ENCODE measurements at regions of chr5 and their contacts with region 1.

Region 1: DNA sequence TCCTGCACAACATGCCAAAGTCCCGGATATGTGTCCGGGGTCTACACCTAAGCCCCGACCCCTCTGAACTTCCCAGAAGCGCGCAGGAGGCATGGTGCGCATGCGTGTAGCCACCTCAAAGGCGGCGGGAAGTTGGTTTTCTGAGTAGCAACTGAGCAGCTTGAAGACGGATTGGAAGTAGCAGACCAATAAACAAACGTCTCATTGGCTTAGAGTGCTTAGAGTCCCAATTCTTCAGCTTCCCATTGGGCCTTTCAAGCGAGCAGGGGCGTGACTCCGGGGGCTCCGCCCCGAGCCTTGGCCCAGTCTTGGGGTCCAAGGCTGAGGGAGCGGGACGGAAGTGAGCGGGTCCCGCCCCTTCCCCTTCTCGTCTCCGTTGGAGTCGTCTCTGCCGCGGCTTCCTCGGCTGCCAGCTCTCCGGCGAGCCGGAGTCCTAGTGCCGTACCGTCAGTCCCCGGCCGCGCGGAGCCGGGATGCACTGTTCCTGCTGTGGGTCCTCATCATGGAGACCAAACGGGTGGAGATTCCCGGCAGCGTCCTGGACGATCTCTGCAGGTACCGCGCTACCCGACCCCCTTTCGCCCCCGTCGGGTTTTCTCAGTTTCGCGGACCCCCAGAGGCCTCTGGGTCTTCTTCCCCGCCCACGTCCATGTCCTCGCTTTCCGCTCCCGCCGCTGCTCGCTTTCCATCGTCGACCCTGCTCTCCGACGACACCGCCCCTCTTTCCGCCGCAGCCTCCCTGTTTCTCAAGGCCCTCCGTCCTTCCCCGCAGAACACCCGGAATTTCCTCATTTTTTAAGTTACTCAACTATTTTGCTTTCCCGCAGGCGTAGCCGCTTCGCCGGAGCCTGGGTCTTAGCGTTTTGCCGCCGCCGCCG is at the start of gene DCP2:
- DNase-seq: peak; percentile 96
- H3K4me3 Mint-ChIP-seq: peak within 1 kb of the TSS; percentile 96
- H3K27ac Mint-ChIP-seq: peak within 1 kb of the TSS; percentile 95
- H3K4me1 Mint-ChIP-seq: peaks cover 38% of the 10 kb centered on the region
- H3K27me3 Mint-ChIP-seq: no peaks in the 10 kb centered on the region
- total RNA-seq, gene DCP2: 129 TPM

Region 2: GRCh38 chr5:112551419-112552032 is 425.1 kb before region 1 on chr5:
- CTCF ChIA-PET with region 1: interaction called, 3 read pairs
- intact Hi-C with region 1: loop called (anchors 5 kb)
- DNase-seq: peak; percentile 45
- H3K4me3 Mint-ChIP-seq: no peak overlapping the region
- H3K27ac Mint-ChIP-seq: no peak overlapping the region
- H3K4me1 Mint-ChIP-seq: no peaks in the 10 kb centered on the region
- H3K27me3 Mint-ChIP-seq: no peaks in the 10 kb centered on the region

Region 3: DNA sequence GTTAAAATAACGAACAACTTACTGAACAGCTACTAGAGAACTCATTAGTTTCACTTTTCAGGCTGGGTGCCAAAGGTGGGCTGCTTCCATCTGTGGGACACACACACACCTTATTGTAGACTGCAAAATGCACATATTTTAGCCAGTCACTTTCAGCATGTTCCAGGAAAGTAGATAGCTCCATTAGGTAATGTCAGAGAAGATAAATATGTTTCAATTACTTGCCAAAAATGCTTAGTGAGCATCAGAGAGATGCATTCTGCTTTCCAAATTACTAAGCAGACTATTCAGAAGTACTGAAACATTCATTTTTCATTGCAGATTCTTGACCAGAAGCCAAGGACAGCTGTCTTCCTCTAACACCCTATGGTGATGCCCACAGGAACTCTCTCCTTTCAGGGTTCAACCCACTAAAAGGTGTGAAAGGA is 295.2 kb before region 1 on chr5:
- CTCF ChIA-PET with region 1: no interaction called
- intact Hi-C with region 1: no loop called
- DNase-seq: no peak
- H3K4me3 Mint-ChIP-seq: no peak overlapping the region
- H3K27ac Mint-ChIP-seq: no peak overlapping the region
- H3K4me1 Mint-ChIP-seq: no peaks in the 10 kb centered on the region
- H3K27me3 Mint-ChIP-seq: peaks cover 20% of the 10 kb centered on the region

Region 4: GRCh38 chr5:112860929-112861637 is 115.6 kb before region 1 on chr5 and contains the start of gene SRP19:
- CTCF ChIA-PET with region 1: interaction called, 4 read pairs
- intact Hi-C with region 1: loop called (anchors 1 kb)
- DNase-seq: peak; percentile 96
- H3K4me3 Mint-ChIP-seq: peak within 1 kb of the TSS; percentile 96
- H3K27ac Mint-ChIP-seq: peak within 1 kb of the TSS; percentile 95
- H3K4me1 Mint-ChIP-seq: peaks cover 30% of the 10 kb centered on the region
- H3K27me3 Mint-ChIP-seq: peaks cover 9% of the 10 kb centered on the region
- total RNA-seq, gene SRP19: 43.7 to 49.6 TPM

Region 5: DNA sequence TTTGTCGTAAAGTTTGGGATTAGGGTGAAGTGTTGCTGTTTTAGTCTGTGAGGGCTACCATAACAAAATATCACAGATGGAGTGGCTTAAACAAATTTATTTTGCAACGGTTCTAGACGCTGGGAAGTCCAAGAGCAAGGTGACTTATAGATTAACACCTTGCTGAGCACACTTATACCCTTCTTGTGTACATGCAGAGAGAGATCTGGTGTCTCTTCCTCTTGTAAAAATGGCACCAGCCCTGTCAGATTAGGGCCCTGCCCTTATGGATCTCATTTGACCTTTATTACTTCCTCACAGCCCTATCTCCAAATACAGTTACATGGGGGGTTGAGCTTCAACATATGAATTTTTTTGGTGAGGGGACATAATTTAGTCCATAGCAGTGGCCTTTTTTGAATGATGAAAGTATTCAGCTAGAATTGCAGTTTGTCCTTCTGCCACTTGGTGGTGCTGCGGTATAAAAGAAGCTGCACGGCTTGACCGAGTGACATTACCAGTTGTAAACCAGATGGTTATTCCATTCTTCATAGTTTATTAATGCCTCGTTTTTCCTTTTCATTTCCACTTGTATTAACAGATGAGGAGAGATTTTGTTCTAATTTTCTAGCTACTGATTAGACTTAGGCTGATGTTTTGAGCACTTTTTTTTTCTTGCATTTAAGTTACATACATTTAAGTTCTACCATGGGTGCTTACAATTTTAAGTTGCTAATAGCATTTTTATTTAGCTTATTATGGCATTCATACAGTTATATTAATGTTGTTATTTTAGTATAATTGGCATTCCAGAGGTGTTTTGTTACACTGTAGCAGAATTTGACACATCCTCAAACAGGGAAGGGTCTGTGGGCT is 19.3 kb after region 1 on chr5:
- CTCF ChIA-PET with region 1: interaction called, 10 read pairs
- intact Hi-C with region 1: no loop called
- DNase-seq: peak; percentile 85
- H3K4me3 Mint-ChIP-seq: no peak overlapping the region
- H3K27ac Mint-ChIP-seq: no peak overlapping the region
- H3K4me1 Mint-ChIP-seq: peaks cover 14% of the 10 kb centered on the region
- H3K27me3 Mint-ChIP-seq: no peaks in the 10 kb centered on the region

Region 6: DNA sequence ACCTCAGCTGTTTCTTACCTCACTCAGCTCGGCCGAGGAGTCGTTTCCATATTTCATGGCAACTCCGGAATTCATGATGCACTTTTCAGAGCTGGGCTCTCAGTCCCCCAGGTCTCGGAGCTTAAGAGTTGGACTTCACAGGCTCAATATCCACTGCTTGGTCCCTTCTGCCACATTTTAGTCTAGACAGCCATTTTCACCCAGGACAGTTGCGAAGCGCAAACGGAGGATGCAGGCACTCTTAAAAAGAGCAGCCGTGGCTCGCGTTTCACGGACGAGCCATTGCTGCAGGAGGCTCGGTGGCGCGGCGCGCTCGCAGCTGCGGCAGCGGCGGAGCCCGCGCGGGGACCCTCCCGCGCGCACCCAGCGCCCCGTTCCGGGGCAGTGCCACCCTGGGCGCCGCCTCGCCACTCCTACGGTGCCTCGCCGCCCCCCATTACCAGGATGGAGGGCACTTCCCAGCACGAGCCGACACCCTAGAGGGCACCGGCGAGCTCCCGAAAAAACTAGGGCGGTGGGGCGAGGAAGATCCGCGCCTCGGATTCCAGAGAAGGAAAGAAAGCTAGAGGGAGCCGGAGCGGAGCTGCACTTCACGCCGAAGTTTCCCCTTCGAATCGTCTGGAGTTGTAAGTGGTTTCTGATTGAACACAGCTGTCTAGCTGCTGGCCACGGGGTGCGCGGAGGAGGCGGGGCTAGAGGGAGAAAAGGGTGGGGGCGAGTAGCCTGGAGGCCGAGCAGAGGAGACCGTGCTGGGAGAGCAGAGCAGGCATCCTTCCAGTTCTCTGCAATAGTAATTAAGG is 317.8 kb after region 1 on chr5:
- CTCF ChIA-PET with region 1: no interaction called
- intact Hi-C with region 1: loop called (anchors 1 kb)
- DNase-seq: peak; percentile 79
- H3K4me3 Mint-ChIP-seq: peak overlapping the region; percentile 81
- H3K27ac Mint-ChIP-seq: no peak overlapping the region
- H3K4me1 Mint-ChIP-seq: peaks cover 14% of the 10 kb centered on the region
- H3K27me3 Mint-ChIP-seq: peaks cover 42% of the 10 kb centered on the region

Region 7: DNA sequence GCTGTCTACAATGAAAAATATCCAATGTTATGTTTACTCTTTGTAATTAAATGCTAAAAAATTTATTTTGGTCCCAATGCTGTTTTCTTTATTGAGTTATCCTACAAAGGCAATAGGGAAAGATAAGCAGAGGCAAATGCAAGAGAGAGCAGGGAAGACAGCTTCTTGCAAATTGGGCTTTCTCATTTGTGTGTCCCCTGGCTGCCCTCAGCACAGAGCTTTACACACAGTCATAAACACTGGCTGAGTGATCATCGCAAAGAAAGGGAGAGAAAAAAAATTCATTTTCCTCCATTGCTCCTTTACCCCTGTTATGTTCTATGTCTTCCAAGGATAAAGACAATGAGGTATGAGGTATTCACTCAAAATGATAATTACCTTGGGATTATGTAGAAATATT is 460.4 kb after region 1 on chr5:
- CTCF ChIA-PET with region 1: no interaction called
- intact Hi-C with region 1: no loop called
- DNase-seq: no peak
- H3K4me3 Mint-ChIP-seq: no peak overlapping the region
- H3K27ac Mint-ChIP-seq: no peak overlapping the region
- H3K4me1 Mint-ChIP-seq: peaks cover 2% of the 10 kb centered on the region
- H3K27me3 Mint-ChIP-seq: peaks cover 2% of the 10 kb centered on the region